CD4-positive, alpha-beta T cell (primary cell): ENCODE measurements at regions of chr19 and their contacts with region 1.

Region 1: DNA sequence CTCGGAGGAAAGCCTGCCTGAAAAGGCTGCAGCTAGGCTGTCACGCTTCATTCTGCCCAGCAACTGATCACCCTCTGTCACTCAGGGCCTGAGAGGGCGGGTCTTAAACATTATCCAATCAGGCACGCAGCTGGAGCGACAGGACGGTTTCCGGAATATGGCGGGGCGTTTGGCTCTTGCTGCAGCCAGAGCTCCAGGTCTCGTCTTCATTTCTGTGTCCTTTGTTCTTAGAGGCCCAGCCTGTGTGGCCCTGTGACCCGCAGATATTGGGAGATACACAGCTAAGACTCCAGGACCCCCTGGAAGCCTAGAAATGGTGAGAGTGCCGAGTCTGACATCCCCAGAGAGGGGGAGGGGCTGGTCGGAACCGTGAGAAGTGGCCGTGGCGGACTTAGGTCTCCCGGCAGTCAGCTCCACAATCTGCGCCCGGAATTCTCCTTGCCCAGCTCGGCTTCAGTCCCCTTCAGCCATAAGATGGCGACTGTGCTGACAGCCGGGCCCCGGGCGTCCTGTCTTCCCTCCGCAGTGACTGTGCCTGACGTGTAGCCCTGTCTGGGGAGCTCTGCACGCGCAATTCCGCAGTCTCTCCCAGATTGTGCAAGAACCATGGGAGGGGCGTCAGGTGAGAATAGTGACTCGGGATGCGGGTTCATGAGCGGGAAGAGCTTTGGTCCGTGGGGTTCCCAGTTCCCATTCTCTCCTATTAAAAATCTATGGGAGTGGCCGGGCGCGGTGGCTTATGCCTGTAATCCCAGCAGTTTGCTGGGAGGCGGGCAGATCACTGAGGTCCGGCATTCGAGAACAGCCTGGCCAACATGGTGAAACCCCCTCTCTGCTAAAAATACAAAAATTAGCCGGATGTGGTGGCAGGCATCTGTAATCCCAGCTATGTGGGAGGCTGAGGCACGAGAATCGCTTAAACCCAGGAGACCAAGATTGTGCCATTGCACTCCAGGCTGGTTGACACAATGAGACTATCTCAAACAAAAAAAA is at the start of gene ZNF429:
- DNase-seq: peak; percentile 79 to 96 (median 88)
- ATAC-seq: peak; percentile 98
- H3K4me3 ChIP-seq: peak within 1 kb of the TSS; percentile 70
- H3K4me3 Mint-ChIP-seq: peak within 1 kb of the TSS; percentile 100
- H3K27ac ChIP-seq: peak within 1 kb of the TSS; percentile 93 to 94
- H3K27ac Mint-ChIP-seq: peak within 1 kb of the TSS; percentile 100
- H3K4me1 ChIP-seq: peaks cover 21% of the 10 kb centered on the region
- H3K4me1 Mint-ChIP-seq: peaks cover 54% of the 10 kb centered on the region
- H3K27me3 ChIP-seq: no peaks in the 10 kb centered on the region
- H3K27me3 Mint-ChIP-seq: no peaks in the 10 kb centered on the region
- CTCF ChIP-seq: no peak
- total RNA-seq, gene ZNF429: 8.0 to 9.2 TPM

Region 2: GRCh38 chr19:21020298-21021227 is 485.2 kb before region 1 on chr19 and contains the start of gene ZNF430:
- CTCF ChIA-PET with region 1: no interaction called
- POLR2A ChIA-PET with region 1: interaction called, 17 read pairs
- intact Hi-C with region 1: loop called in 1 of 2 experiments (anchors 10 kb)
- DNase-seq: peak; percentile 82 to 98 (median 87)
- ATAC-seq: peak; percentile 95
- H3K4me3 ChIP-seq: peak within 1 kb of the TSS; percentile 98
- H3K4me3 Mint-ChIP-seq: peak within 1 kb of the TSS; percentile 98
- H3K27ac ChIP-seq: peak within 1 kb of the TSS; percentile 86 to 93
- H3K27ac Mint-ChIP-seq: peak within 1 kb of the TSS; percentile 100
- H3K4me1 ChIP-seq: peaks cover 29% of the 10 kb centered on the region
- H3K4me1 Mint-ChIP-seq: peaks cover 52% of the 10 kb centered on the region
- H3K27me3 ChIP-seq: no peaks in the 10 kb centered on the region
- H3K27me3 Mint-ChIP-seq: no peaks in the 10 kb centered on the region
- CTCF ChIP-seq: no peak
- total RNA-seq, gene ZNF430: 40.5 to 43.8 TPM

Region 3: DNA sequence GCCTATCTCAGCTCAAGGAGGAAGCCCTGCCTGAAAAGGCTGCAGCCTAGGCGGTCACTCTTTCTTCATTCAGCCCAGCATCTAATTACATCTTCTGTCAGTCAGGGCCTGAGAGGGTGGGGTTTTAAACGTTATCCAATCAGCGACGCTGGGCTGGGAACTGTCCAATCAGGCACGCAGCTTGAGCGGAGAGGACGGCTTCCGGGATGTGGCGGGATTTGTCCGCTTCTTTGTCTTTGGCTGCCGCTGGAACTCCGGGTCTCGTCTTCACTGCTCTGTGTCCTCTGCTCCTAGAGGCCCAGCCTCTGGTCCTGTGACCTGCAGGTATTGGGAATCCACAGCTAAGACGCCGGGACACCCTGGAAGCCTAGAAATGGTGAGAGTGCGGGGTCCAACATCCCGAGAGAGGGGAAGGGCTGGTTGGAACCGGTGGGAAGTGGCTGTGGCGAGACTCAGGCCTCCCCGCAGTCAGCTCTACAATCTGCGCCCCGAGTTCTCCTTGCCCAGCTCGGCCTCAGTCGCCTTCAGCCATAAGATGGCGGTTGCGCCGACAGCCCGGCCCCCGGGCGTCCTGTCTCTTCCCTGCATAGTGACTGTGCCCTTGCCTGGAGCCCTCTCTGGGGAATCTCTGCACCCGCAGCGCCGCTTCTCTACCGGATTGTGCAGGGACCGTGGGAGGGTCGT is 146.8 kb before region 1 on chr19 and contains the start of gene ZNF738:
- CTCF ChIA-PET with region 1: no interaction called
- POLR2A ChIA-PET with region 1: interaction called, 14 read pairs
- intact Hi-C with region 1: no loop called
- DNase-seq: peak; percentile 69 to 92 (median 74)
- ATAC-seq: peak; percentile 96
- H3K4me3 ChIP-seq: peak within 1 kb of the TSS; percentile 78
- H3K4me3 Mint-ChIP-seq: peak within 1 kb of the TSS; percentile 100
- H3K27ac ChIP-seq: peak within 1 kb of the TSS; percentile 46 to 63
- H3K27ac Mint-ChIP-seq: peak within 1 kb of the TSS; percentile 94
- H3K4me1 ChIP-seq: no peaks in the 10 kb centered on the region
- H3K4me1 Mint-ChIP-seq: peaks cover 18% of the 10 kb centered on the region
- H3K27me3 ChIP-seq: no peaks in the 10 kb centered on the region
- H3K27me3 Mint-ChIP-seq: no peaks in the 10 kb centered on the region
- CTCF ChIP-seq: no peak
- total RNA-seq, gene ZNF738: 4.7 to 5.0 TPM

Region 4: GRCh38 chr19:21519488-21519887 is 13.7 kb after region 1 on chr19:
- CTCF ChIA-PET with region 1: interaction called, 5 read pairs
- POLR2A ChIA-PET with region 1: interaction called, 11 read pairs
- intact Hi-C with region 1: no loop called
- DNase-seq: peak in 2 of 14 experiments; percentile 4 to 15
- ATAC-seq: no peak
- H3K4me3 ChIP-seq: no peak overlapping the region
- H3K4me3 Mint-ChIP-seq: peak overlapping the region; percentile 38
- H3K27ac ChIP-seq: no peak overlapping the region
- H3K27ac Mint-ChIP-seq: no peak overlapping the region
- H3K4me1 ChIP-seq: no peaks in the 10 kb centered on the region
- H3K4me1 Mint-ChIP-seq: peaks cover 35% of the 10 kb centered on the region
- H3K27me3 ChIP-seq: no peaks in the 10 kb centered on the region
- H3K27me3 Mint-ChIP-seq: no peaks in the 10 kb centered on the region
- CTCF ChIP-seq: no peak

Region 5: GRCh38 chr19:21604351-21604926 is 98.7 kb after region 1 on chr19:
- CTCF ChIA-PET with region 1: no interaction called
- POLR2A ChIA-PET with region 1: interaction called, 32 read pairs
- intact Hi-C with region 1: no loop called
- DNase-seq: peak in 3 of 14 experiments; percentile 34 to 59 (median 54)
- ATAC-seq: peak; percentile 84
- H3K4me3 ChIP-seq: peak overlapping the region; percentile 56
- H3K4me3 Mint-ChIP-seq: peak overlapping the region; percentile 94
- H3K27ac ChIP-seq: peak overlapping the region; percentile 12 to 54
- H3K27ac Mint-ChIP-seq: peak overlapping the region; percentile 91
- H3K4me1 ChIP-seq: peaks cover 8% of the 10 kb centered on the region
- H3K4me1 Mint-ChIP-seq: peaks cover 21% of the 10 kb centered on the region
- H3K27me3 ChIP-seq: no peaks in the 10 kb centered on the region
- H3K27me3 Mint-ChIP-seq: no peaks in the 10 kb centered on the region
- CTCF ChIP-seq: no peak

Region 6: GRCh38 chr19:21851596-21852345 is 346.0 kb after region 1 on chr19:
- CTCF ChIA-PET with region 1: no interaction called
- POLR2A ChIA-PET with region 1: interaction called, 12 read pairs
- intact Hi-C with region 1: no loop called
- DNase-seq: peak; percentile 79 to 94 (median 86)
- ATAC-seq: peak; percentile 99
- H3K4me3 ChIP-seq: peak overlapping the region; percentile 72
- H3K4me3 Mint-ChIP-seq: peak overlapping the region; percentile 97
- H3K27ac ChIP-seq: peak overlapping the region; percentile 55 to 56
- H3K27ac Mint-ChIP-seq: peak overlapping the region; percentile 94
- H3K4me1 ChIP-seq: peaks cover 14% of the 10 kb centered on the region
- H3K4me1 Mint-ChIP-seq: peaks cover 28% of the 10 kb centered on the region
- H3K27me3 ChIP-seq: no peaks in the 10 kb centered on the region
- H3K27me3 Mint-ChIP-seq: no peaks in the 10 kb centered on the region
- CTCF ChIP-seq: no peak